Gastrocnemius medialis (tissue), 4 donors: ENCODE measurements at regions of chr4 and their contacts with region 1.

Region 1: GRCh38 chr4:124262211-124263179 is 450.0 kb downstream of the ANKRD50 start:
- DNase-seq: peak; percentile 28 to 41
- ATAC-seq: peak; percentile 73 to 78
- H3K4me3 ChIP-seq: no peak overlapping the region
- H3K27ac ChIP-seq: no peak overlapping the region
- H3K4me1 ChIP-seq: no peaks in the 10 kb centered on the region
- H3K27me3 ChIP-seq: no peaks in the 10 kb centered on the region
- CTCF ChIP-seq: peak; percentile 60 to 80 (median 77)
- POLR2A ChIP-seq: no peak

Region 2: DNA sequence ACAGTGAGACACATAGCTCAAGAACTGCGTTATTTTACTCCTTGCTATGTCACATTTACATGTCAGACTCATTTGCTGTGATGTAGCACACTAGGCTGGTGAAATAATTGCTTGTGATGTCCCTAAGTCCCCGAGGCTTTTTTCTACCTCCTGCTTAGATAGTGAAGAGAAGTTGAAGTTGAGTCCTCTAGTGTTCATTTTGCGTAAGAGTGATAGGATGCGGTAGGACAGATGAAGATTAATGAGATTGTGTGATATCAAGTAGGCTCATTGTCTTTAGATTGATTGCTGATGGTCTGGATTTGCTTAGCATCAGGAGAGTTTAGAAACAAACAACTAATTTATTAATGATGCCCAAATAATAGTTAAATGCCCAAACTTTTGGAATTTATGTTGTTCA is 1166.5 kb before region 1 on chr4:
- in situ Hi-C with region 1: loop called (anchors 10 kb)
- intact Hi-C with region 1: no loop called
- DNase-seq: no peak
- ATAC-seq: no peak
- H3K4me3 ChIP-seq: no peak overlapping the region
- H3K27ac ChIP-seq: no peak overlapping the region
- H3K4me1 ChIP-seq: no peaks in the 10 kb centered on the region
- H3K27me3 ChIP-seq: no peaks in the 10 kb centered on the region
- CTCF ChIP-seq: no peak
- POLR2A ChIP-seq: no peak

Region 3: GRCh38 chr4:123102897-123103471 is 1159.5 kb before region 1 on chr4:
- in situ Hi-C with region 1: loop called (anchors 10 kb)
- intact Hi-C with region 1: loop called (anchors 1 kb)
- DNase-seq: no peak
- ATAC-seq: peak in 1 of 2 donors; percentile 78
- H3K4me3 ChIP-seq: no peak overlapping the region
- H3K27ac ChIP-seq: no peak overlapping the region
- H3K4me1 ChIP-seq: peaks cover 0 to 3% of the 10 kb centered on the region in 2 donors
- H3K27me3 ChIP-seq: no peaks in the 10 kb centered on the region
- CTCF ChIP-seq: peak; percentile 47 to 75 (median 67)
- POLR2A ChIP-seq: no peak

Region 4: DNA sequence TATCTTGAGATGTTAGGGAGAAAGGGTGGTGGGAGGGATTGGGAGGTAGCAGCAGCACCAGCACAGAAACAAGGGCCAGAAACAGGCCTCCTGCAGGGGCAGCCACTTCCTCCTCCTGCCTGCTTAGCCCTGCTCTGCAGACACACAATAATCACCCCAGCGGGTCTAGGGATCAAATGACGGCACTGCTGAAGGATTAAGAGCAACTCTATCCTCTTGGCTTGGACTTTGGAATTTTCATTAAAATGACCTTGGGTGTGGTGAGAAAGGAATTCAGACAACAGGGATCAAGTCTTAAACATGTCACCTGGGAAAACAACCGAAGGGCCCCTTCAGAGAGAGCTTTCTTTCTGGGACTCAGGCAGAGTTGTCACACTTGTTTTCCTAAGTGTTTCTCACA is 512.5 kb before region 1 on chr4:
- in situ Hi-C with region 1: loop called in 1 of 4 experiments (anchors 25 kb)
- intact Hi-C with region 1: no loop called
- DNase-seq: no peak
- ATAC-seq: peak; percentile 39 to 54
- H3K4me3 ChIP-seq: no peak overlapping the region
- H3K27ac ChIP-seq: peak overlapping the region; percentile 57 to 73 (median 64)
- H3K4me1 ChIP-seq: peaks cover 26% of the 10 kb centered on the region in 2 donors
- H3K27me3 ChIP-seq: no peaks in the 10 kb centered on the region
- CTCF ChIP-seq: no peak
- POLR2A ChIP-seq: no peak